CD8-positive, alpha-beta T cell (primary cell): ENCODE measurements at regions of chr12 and their contacts with region 1.

Region 1: GRCh38 chr12:10982244-10982643 is 4.5 kb downstream of the TAS2R50 start:
- DNase-seq: peak in 8 of 9 experiments; percentile 18 to 88 (median 48)
- ATAC-seq: peak; percentile 90
- H3K4me3 ChIP-seq: no peak overlapping the region
- H3K4me3 Mint-ChIP-seq: peak overlapping the region; percentile 3
- H3K27ac ChIP-seq: no peak overlapping the region
- H3K27ac Mint-ChIP-seq: no peak overlapping the region
- H3K4me1 ChIP-seq: peaks cover 20% of the 10 kb centered on the region
- H3K4me1 Mint-ChIP-seq: peaks cover 40% of the 10 kb centered on the region
- H3K27me3 ChIP-seq: peaks cover 0 to 8% of the 10 kb centered on the region in 2 experiments
- H3K27me3 Mint-ChIP-seq: peaks cover 11% of the 10 kb centered on the region
- CTCF ChIP-seq: no peak

Region 2: DNA sequence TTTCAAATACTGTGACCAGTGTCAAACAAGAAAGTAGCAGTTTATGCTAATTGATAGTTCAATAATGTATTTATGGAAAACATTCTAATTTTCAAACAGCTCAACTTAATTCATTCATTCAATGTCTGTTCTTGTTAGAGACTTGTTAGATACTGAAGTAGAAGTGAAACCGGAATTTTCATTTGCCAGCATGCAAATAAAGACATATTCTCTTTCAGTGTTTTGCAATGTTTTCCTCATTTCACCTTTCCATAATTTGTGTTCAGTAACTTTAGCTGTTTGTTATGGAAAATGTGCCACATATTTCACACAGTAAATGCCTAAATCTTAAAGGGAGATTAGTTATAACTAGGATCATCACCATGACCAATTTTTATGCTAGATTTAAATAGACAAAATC is 16.8 kb before region 1 on chr12:
- CTCF ChIA-PET with region 1: no interaction called
- POLR2A ChIA-PET with region 1: interaction called, 4 read pairs
- intact Hi-C with region 1: loop called in 1 of 2 experiments (anchors 2 kb)
- DNase-seq: no peak
- ATAC-seq: no peak
- H3K4me3 ChIP-seq: no peak overlapping the region
- H3K4me3 Mint-ChIP-seq: no peak overlapping the region
- H3K27ac ChIP-seq: no peak overlapping the region
- H3K27ac Mint-ChIP-seq: no peak overlapping the region
- H3K4me1 ChIP-seq: peaks cover 8% of the 10 kb centered on the region
- H3K4me1 Mint-ChIP-seq: peaks cover 14% of the 10 kb centered on the region
- H3K27me3 ChIP-seq: no peaks in the 10 kb centered on the region
- H3K27me3 Mint-ChIP-seq: no peaks in the 10 kb centered on the region
- CTCF ChIP-seq: no peak

Region 3: GRCh38 chr12:11171145-11171968 is 189.1 kb after region 1 on chr12 and contains the start of gene SMIM10L1:
- CTCF ChIA-PET with region 1: no interaction called
- POLR2A ChIA-PET with region 1: interaction called, 3 read pairs
- intact Hi-C with region 1: loop called in 1 of 2 experiments (anchors 1 kb)
- DNase-seq: peak; percentile 78 to 95 (median 88)
- ATAC-seq: peak; percentile 91
- H3K4me3 ChIP-seq: peak within 1 kb of the TSS; percentile 56 to 73
- H3K4me3 Mint-ChIP-seq: peak within 1 kb of the TSS; percentile 99
- H3K27ac ChIP-seq: peak within 1 kb of the TSS; percentile 72 to 86
- H3K27ac Mint-ChIP-seq: peak within 1 kb of the TSS; percentile 100
- H3K4me1 ChIP-seq: peaks cover 38% of the 10 kb centered on the region
- H3K4me1 Mint-ChIP-seq: peaks cover 66% of the 10 kb centered on the region
- H3K27me3 ChIP-seq: no peaks in the 10 kb centered on the region
- H3K27me3 Mint-ChIP-seq: no peaks in the 10 kb centered on the region
- CTCF ChIP-seq: no peak
- total RNA-seq, gene SMIM10L1: 9.2 to 9.6 TPM